ENCODE measurements at regions of chr5 and their contacts with region 1.

Region 1: GRCh38 chr5:177997307-177997670 is 1.2 kb upstream of the PROP1 start:
- DNase-seq: peak in 1 of 4 experiments; percentile 6
- ATAC-seq: no peak; the same call in 2 of the 3 replicates
- H3K4me3 ChIP-seq: no peak overlapping the region
- H3K27ac ChIP-seq: no peak overlapping the region
- H3K4me1 ChIP-seq: no peaks in the 10 kb centered on the region; a peak in 1 of 5 replicates
- H3K27me3 ChIP-seq: peaks cover 8 to 55% of the 10 kb centered on the region in 2 experiments; a peak in 4 of 5 replicates
- CTCF ChIP-seq: no peak
- EP300 ChIP-seq: no peak
- POLR2A ChIP-seq: no peak
- RAD21 ChIP-seq: no peak

Region 2: DNA sequence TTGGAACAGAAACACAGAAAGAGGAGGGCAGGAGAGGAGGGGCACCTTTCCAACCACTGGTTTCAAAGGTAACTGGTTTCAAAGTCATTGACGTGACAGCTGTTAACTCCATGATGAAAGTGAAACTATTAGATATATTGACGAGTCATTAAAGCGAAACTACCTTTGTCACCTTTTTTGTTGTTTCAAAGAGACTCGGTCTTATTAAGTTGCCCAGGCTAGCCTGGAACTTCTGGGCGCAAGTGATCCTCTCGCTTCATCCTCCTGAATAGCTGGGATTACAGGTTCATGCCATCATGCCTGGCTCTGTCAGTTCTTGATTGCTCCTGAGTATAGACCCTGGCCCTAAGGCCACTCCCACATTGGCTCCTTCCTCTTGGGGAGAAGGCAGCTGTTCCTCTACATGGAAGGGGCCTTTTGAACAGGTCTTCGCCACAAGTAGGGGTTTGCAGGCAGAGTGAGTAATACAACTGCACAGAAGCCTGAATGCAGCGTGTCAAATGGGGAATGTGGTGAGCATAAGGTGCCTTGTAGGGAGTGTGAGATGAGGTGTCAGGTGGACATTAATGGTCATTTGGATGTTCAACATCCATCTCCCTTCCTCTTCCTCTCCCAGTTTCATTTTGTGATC is 584.6 kb before region 1 on chr5:
- CTCF ChIA-PET with region 1: no interaction called
- POLR2A ChIA-PET with region 1: no interaction called
- in situ Hi-C with region 1: no loop called
- intact Hi-C with region 1: no loop called
- DNase-seq: no peak
- ATAC-seq: peak; percentile 16; the same call in 2 of the 3 replicates
- H3K4me3 ChIP-seq: no peak overlapping the region
- H3K27ac ChIP-seq: no peak overlapping the region
- H3K4me1 ChIP-seq: no peaks in the 10 kb centered on the region; a peak in 1 of 5 replicates
- H3K27me3 ChIP-seq: no peaks in the 10 kb centered on the region
- CTCF ChIP-seq: no peak
- EP300 ChIP-seq: no peak
- POLR2A ChIP-seq: no peak
- RAD21 ChIP-seq: no peak

Region 3: GRCh38 chr5:178163772-178164735 is 166.8 kb after region 1 on chr5:
- CTCF ChIA-PET with region 1: no interaction called
- POLR2A ChIA-PET with region 1: no interaction called
- in situ Hi-C with region 1: no loop called
- intact Hi-C with region 1: loop called (anchors 10 kb)
- DNase-seq: peak; percentile 88 to 90 (median 89)
- ATAC-seq: peak; percentile 98
- H3K4me3 ChIP-seq: no peak overlapping the region
- H3K27ac ChIP-seq: no peak overlapping the region
- H3K4me1 ChIP-seq: peaks cover 3 to 15% of the 10 kb centered on the region in 2 experiments; a peak in 3 of 5 replicates
- H3K27me3 ChIP-seq: peaks cover 3 to 18% of the 10 kb centered on the region in 2 experiments; a peak in 2 of 5 replicates
- CTCF ChIP-seq: peak; percentile 97 to 98 (median 98)
- EP300 ChIP-seq: peak; percentile 18; the same call in 1 of the 2 replicates
- POLR2A ChIP-seq: no peak
- RAD21 ChIP-seq: peak; percentile 96 to 99

Measured in K562 (cell line).